ENCODE measurements at regions of chr1 and their contacts with region 1.

Region 1: GRCh38 chr1:118944133-118944532 is 44.0 kb downstream of the TBX15 start:
- DNase-seq: no peak
- ATAC-seq: no peak
- H3K4me3 ChIP-seq: no peak overlapping the region
- H3K4me3 Mint-ChIP-seq: no peak overlapping the region
- H3K27ac ChIP-seq: no peak overlapping the region
- H3K27ac Mint-ChIP-seq: no peak overlapping the region
- H3K4me1 ChIP-seq: no peaks in the 10 kb centered on the region
- H3K4me1 Mint-ChIP-seq: no peaks in the 10 kb centered on the region
- H3K27me3 ChIP-seq: no peaks in the 10 kb centered on the region
- H3K27me3 Mint-ChIP-seq: peaks cover 0 to 4% of the 10 kb centered on the region in 2 donors

Region 2: GRCh38 chr1:118659640-118660039 is 284.5 kb before region 1 on chr1:
- CTCF ChIA-PET with region 1: no interaction called
- POLR2A ChIA-PET with region 1: interaction called in 1 of 2 experiments, 18 read pairs
- DNase-seq: no peak
- ATAC-seq: no peak
- H3K4me3 ChIP-seq: no peak overlapping the region
- H3K4me3 Mint-ChIP-seq: no peak overlapping the region
- H3K27ac ChIP-seq: no peak overlapping the region
- H3K27ac Mint-ChIP-seq: no peak overlapping the region
- H3K4me1 ChIP-seq: no peaks in the 10 kb centered on the region
- H3K4me1 Mint-ChIP-seq: no peaks in the 10 kb centered on the region
- H3K27me3 ChIP-seq: no peaks in the 10 kb centered on the region
- H3K27me3 Mint-ChIP-seq: no peaks in the 10 kb centered on the region

Region 3: GRCh38 chr1:118809586-118809985 is 134.5 kb before region 1 on chr1:
- CTCF ChIA-PET with region 1: no interaction called
- POLR2A ChIA-PET with region 1: no interaction called
- DNase-seq: no peak
- ATAC-seq: no peak
- H3K4me3 ChIP-seq: no peak overlapping the region
- H3K4me3 Mint-ChIP-seq: no peak overlapping the region
- H3K27ac ChIP-seq: no peak overlapping the region
- H3K27ac Mint-ChIP-seq: no peak overlapping the region
- H3K4me1 ChIP-seq: no peaks in the 10 kb centered on the region
- H3K4me1 Mint-ChIP-seq: no peaks in the 10 kb centered on the region
- H3K27me3 ChIP-seq: no peaks in the 10 kb centered on the region
- H3K27me3 Mint-ChIP-seq: no peaks in the 10 kb centered on the region

Measured in T-cell (primary cell).